ENCODE measurements at regions of chr15 and their contacts with region 1.

Region 1: DNA sequence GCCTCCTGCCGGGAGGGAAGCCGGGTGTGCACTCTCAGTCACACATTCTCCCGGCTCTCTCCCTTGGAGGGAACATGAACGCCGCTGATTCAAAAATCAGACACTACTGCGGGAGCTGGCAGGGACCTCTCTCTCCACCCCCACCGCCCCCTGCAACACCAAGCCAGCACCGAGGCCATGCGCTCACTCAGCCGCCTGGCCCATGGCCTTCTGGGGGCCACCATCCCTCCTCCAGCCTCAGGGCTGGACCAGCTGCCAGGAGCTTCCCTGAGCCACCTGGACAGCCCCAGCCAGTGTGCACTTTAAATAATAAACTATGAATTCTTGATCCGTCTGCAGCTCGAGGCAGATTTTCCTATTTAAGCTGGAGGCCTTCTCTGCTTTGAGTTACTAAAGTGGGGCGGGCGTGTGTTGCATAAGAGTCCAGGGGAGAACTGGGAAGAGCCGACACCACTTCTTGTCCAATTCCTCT is 30.6 kb downstream of the ADAMTS17 start:
- DNase-seq: no peak
- ATAC-seq: no peak
- H3K4me3 ChIP-seq: no peak overlapping the region
- H3K4me3 Mint-ChIP-seq: no peak overlapping the region
- H3K27ac ChIP-seq: no peak overlapping the region
- H3K27ac Mint-ChIP-seq: no peak overlapping the region
- H3K4me1 ChIP-seq: peaks cover 3% of the 10 kb centered on the region
- H3K4me1 Mint-ChIP-seq: peaks cover 7% of the 10 kb centered on the region
- H3K27me3 ChIP-seq: no peaks in the 10 kb centered on the region
- H3K27me3 Mint-ChIP-seq: no peaks in the 10 kb centered on the region
- CTCF ChIP-seq: no peak

Region 2: GRCh38 chr15:100241572-100242482 is 69.4 kb before region 1 on chr15:
- CTCF ChIA-PET with region 1: no interaction called
- POLR2A ChIA-PET with region 1: no interaction called
- intact Hi-C with region 1: no loop called
- DNase-seq: no peak
- ATAC-seq: no peak
- H3K4me3 ChIP-seq: no peak overlapping the region
- H3K4me3 Mint-ChIP-seq: no peak overlapping the region
- H3K27ac ChIP-seq: no peak overlapping the region
- H3K27ac Mint-ChIP-seq: no peak overlapping the region
- H3K4me1 ChIP-seq: no peaks in the 10 kb centered on the region
- H3K4me1 Mint-ChIP-seq: no peaks in the 10 kb centered on the region
- H3K27me3 ChIP-seq: no peaks in the 10 kb centered on the region
- H3K27me3 Mint-ChIP-seq: peaks cover 2% of the 10 kb centered on the region
- CTCF ChIP-seq: no peak

Region 3: DNA sequence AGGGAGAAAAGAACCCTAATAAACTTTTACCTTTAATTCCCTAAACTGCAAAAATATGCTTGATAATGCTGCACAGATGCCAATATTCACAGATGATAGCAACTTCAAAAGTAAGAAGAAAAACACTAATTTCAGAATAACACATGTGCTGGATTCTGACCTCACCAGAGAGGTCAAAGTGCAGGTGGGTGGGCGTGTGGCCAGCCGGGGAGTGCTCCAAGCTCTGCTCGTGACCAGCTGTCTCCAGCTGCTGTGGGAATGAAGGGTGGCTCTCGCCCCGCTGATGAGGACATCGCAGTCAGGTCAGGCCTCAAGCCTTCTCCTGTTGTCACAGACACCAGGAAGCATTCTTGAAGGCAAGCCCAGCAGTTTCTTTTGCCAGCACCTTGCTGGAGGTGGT is 26.5 kb before region 1 on chr15:
- CTCF ChIA-PET with region 1: no interaction called
- POLR2A ChIA-PET with region 1: no interaction called
- intact Hi-C with region 1: no loop called
- DNase-seq: no peak
- ATAC-seq: no peak
- H3K4me3 ChIP-seq: no peak overlapping the region
- H3K4me3 Mint-ChIP-seq: no peak overlapping the region
- H3K27ac ChIP-seq: no peak overlapping the region
- H3K27ac Mint-ChIP-seq: no peak overlapping the region
- H3K4me1 ChIP-seq: no peaks in the 10 kb centered on the region
- H3K4me1 Mint-ChIP-seq: peaks cover 2% of the 10 kb centered on the region
- H3K27me3 ChIP-seq: no peaks in the 10 kb centered on the region
- H3K27me3 Mint-ChIP-seq: no peaks in the 10 kb centered on the region
- CTCF ChIP-seq: no peak

Region 4: DNA sequence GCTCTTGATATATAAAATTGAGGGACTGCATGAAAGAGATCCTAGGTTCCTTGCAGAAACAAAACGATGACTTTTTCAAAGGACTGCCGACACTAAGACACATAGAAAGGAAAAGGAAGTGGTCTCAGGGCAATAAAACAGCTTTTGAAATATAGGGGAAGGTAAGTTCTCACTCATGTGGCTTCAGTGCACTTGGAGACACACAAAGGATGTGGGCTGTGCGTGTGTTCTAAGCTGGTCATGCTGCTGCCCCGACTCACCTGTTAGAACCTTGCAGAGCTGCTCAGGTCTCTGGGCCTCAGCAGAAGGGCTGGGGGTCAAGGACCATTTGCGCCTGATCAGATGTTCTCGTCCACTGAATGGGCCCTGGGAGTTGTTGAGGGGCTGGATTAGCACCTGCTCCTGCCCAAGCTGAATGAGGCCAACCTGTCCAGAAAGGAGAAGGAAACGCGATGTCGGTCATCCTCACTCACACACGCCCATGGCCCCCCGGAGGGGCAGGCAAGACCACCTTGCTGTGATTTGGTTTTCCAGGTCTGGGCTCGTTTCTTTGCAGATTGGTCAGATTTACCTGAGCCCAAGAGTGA is 19.5 kb after region 1 on chr15:
- CTCF ChIA-PET with region 1: interaction called, 3 read pairs
- POLR2A ChIA-PET with region 1: interaction called, 4 read pairs
- intact Hi-C with region 1: loop called in 1 of 2 experiments (anchors 1 kb)
- DNase-seq: peak in 7 of 9 experiments; percentile 36 to 82 (median 61)
- ATAC-seq: peak; percentile 88
- H3K4me3 ChIP-seq: peak overlapping the region; percentile 30 to 41
- H3K4me3 Mint-ChIP-seq: peak overlapping the region; percentile 61
- H3K27ac ChIP-seq: peak overlapping the region in 1 of 2 experiments; percentile 52
- H3K27ac Mint-ChIP-seq: peak overlapping the region; percentile 76
- H3K4me1 ChIP-seq: peaks cover 71% of the 10 kb centered on the region
- H3K4me1 Mint-ChIP-seq: peaks cover 81% of the 10 kb centered on the region
- H3K27me3 ChIP-seq: no peaks in the 10 kb centered on the region
- H3K27me3 Mint-ChIP-seq: peaks cover 2% of the 10 kb centered on the region
- CTCF ChIP-seq: no peak

Measured in CD8-positive, alpha-beta T cell (primary cell).